Mammary epithelial cell (primary cell): ENCODE measurements at regions of chr11 and their contacts with region 1.

Region 1: GRCh38 chr11:128290106-128290840 is 297.1 kb downstream of the ETS1 start:
- DNase-seq: peak; percentile 45
- H3K4me3 ChIP-seq: no peak overlapping the region
- H3K27ac ChIP-seq: no peak overlapping the region
- H3K4me1 ChIP-seq: peaks cover 4% of the 10 kb centered on the region
- H3K27me3 ChIP-seq: no peaks in the 10 kb centered on the region
- CTCF ChIP-seq: peak; percentile 79 to 86

Region 2: GRCh38 chr11:127738771-127739286 is 551.4 kb before region 1 on chr11:
- CTCF ChIA-PET with region 1: no interaction called
- dilution Hi-C with region 1: no loop called
- in situ Hi-C with region 1: no loop called
- intact Hi-C with region 1: no loop called
- DNase-seq: no peak
- H3K4me3 ChIP-seq: no peak overlapping the region
- H3K27ac ChIP-seq: no peak overlapping the region
- H3K4me1 ChIP-seq: no peaks in the 10 kb centered on the region
- H3K27me3 ChIP-seq: no peaks in the 10 kb centered on the region
- CTCF ChIP-seq: no peak

Region 3: DNA sequence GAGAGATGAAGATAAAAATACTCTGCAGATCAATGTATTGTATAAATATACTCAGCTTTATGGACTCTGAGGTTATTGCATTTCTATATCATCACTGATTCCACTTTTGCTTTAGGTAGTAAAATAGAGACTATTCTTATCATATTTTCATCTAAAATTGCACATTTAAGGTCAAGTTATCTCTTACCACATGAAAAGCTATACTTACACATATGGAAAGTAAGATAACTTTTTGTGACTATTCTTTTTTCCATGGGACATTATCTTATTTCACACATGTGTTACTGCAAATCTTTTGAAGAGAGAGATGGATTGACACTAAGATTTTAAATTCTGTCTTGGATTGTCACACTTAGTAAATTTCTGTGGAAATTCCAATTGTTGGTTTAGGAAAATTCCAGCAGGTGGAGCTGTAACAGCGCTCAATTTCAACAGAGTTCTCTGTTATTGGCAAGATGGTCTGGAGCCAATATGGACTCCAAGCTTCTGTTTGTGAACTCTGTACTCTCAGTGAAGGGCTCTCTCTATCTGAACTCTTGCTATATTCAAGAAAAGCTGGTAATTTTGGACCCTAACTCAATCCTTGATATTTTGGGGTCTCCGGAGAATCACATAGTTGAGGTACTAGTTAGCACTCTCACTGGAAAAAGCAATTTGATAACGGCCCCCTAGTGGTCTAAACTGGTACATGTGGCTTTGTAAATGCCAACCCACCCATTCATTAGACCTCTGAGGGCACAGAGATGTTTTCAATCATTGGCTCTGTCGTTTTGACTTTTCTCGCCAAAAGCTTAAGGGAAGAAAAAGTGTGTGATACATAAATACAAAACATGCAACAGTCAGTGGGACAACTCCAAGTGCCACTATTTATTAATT is 132.6 kb before region 1 on chr11:
- CTCF ChIA-PET with region 1: no interaction called
- dilution Hi-C with region 1: no loop called
- in situ Hi-C with region 1: no loop called
- intact Hi-C with region 1: loop called (anchors 5 kb)
- DNase-seq: peak; percentile 67
- H3K4me3 ChIP-seq: peak overlapping the region in 2 of 3 experiments; percentile 13 to 26
- H3K27ac ChIP-seq: peak overlapping the region; percentile 11
- H3K4me1 ChIP-seq: no peaks in the 10 kb centered on the region
- H3K27me3 ChIP-seq: no peaks in the 10 kb centered on the region
- CTCF ChIP-seq: peak; percentile 73 to 76

Region 4: GRCh38 chr11:128180446-128181087 is 109.7 kb before region 1 on chr11:
- CTCF ChIA-PET with region 1: no interaction called
- dilution Hi-C with region 1: loop called (anchors 10 kb)
- in situ Hi-C with region 1: loop called (anchors 10 kb)
- intact Hi-C with region 1: loop called (anchors 2 kb)
- DNase-seq: peak; percentile 89
- H3K4me3 ChIP-seq: no peak overlapping the region
- H3K27ac ChIP-seq: peak overlapping the region; percentile 45
- H3K4me1 ChIP-seq: peaks cover 22% of the 10 kb centered on the region
- H3K27me3 ChIP-seq: no peaks in the 10 kb centered on the region
- CTCF ChIP-seq: no peak

Region 5: DNA sequence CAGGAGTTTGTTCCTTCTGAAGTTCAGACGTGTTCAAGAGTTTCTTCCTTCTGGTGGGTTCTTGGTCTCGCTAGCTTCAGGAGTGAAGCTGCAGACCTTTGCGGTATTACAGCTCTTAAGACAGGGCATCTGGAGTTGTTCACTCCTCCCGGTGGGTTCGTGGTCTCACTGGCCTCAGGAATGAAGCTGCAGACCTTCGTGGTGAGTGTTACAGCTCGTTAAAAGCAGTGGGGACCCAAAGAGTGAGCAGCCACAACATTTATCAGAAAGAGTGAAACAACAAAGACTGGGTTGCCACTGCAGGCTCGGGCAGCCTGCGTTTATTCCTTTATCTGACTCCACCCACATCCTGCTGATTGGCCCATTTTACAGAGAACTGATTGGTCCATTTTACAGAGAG is 76.0 kb before region 1 on chr11:
- CTCF ChIA-PET with region 1: no interaction called
- dilution Hi-C with region 1: no loop called
- in situ Hi-C with region 1: no loop called
- intact Hi-C with region 1: no loop called
- DNase-seq: no peak
- H3K4me3 ChIP-seq: no peak overlapping the region
- H3K27ac ChIP-seq: no peak overlapping the region
- H3K4me1 ChIP-seq: peaks cover 22% of the 10 kb centered on the region
- H3K27me3 ChIP-seq: no peaks in the 10 kb centered on the region
- CTCF ChIP-seq: no peak

Region 6: DNA sequence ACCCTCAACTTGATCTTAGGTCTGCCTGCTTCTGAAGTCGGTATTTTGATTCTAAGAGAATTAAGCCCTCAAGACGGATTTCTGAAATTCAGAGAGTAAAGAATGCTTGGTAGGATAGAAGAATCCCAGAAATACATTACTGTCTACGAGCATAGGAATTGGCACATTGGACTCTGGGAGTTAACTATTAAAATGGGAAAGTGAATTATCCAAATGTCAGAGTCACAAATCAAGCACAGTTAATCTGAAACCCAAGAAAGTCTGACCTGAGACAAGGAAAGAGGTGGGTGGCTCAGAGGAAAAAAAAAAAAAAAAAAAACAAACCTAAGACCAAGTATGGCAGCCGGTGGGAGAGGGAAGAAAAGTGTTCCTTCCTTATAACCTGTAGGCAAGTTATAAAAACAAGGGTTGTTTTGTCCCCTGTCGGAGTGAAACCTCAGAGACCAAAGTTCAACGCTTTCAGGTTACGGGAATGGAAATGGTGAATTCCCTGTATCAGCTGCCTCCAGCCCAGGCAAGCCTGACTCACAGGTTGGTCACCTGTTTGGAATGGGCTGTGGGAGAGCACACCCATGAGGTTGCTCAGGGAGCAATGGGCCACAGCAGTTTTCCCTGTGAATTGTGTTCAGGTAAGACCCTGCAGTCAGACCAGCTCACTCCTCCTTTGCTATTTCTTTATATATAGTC is 158.1 kb after region 1 on chr11:
- CTCF ChIA-PET with region 1: no interaction called
- dilution Hi-C with region 1: no loop called
- in situ Hi-C with region 1: loop called in 1 of 2 experiments (anchors 10 kb)
- intact Hi-C with region 1: loop called (anchors 2 kb)
- DNase-seq: peak; percentile 99
- H3K4me3 ChIP-seq: peak overlapping the region; percentile 7 to 41 (median 26)
- H3K27ac ChIP-seq: peak overlapping the region; percentile 99
- H3K4me1 ChIP-seq: peaks cover 43% of the 10 kb centered on the region
- H3K27me3 ChIP-seq: no peaks in the 10 kb centered on the region
- CTCF ChIP-seq: peak in 1 of 2 donors; percentile 44

Region 7: GRCh38 chr11:128624269-128625175 is 334.2 kb after region 1 on chr11:
- CTCF ChIA-PET with region 1: no interaction called
- dilution Hi-C with region 1: no loop called
- in situ Hi-C with region 1: loop called in 1 of 2 experiments (anchors 5 kb)
- intact Hi-C with region 1: no loop called
- DNase-seq: no peak
- H3K4me3 ChIP-seq: no peak overlapping the region
- H3K27ac ChIP-seq: no peak overlapping the region
- H3K4me1 ChIP-seq: no peaks in the 10 kb centered on the region
- H3K27me3 ChIP-seq: no peaks in the 10 kb centered on the region
- CTCF ChIP-seq: no peak